Endothelial cell of umbilical vein (primary cell): ENCODE measurements at regions of chr2 and their contacts with region 1.

Region 1: DNA sequence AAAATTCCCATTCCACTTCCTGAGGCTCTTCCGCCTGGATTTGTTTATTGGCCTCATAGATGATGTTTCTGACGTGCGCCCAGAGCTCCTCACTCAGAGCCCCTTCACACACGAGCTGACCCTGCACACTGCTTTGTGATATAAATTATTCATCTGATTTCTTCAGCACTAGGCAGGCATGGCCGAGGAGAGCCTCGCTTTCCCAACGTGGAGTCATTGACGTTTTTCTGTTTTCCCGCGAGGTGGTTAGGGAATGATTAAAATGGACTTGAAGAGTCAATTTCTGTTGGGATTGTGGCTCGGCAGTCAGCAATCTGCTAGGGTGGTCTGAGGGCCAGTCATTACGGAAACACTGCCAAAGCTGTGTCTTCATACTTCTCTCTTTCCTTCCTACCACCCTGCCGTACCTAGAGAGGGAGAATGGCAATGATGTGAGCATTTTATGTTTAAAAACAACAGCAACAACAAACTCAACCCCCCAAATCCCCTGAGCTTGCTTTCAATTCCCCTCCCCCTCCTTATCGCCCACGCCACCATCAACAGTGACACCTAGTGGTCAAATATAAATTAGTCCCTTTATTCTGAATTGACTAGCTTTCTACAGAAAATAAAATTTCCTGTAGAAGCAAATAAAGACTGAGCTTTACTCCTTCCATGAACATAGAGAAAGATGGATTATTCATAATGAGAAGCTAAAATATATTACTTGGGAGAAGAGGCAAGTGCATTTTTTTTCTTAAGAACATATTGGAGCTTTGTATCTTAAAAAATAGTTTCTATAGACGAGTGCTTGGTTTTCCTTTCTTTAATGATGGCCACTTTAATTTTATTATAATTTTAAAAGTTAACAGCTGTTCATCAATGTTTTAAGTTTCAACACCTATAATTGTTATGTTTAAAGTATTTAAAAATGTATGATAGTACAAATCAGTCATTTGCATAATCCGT is 285.1 kb downstream of the MTX2 start:
- DNase-seq: peak; percentile 89
- H3K4me3 ChIP-seq: peak overlapping the region; percentile 11 to 48 (median 44)
- H3K27ac ChIP-seq: peak overlapping the region; percentile 77
- H3K4me1 ChIP-seq: peaks cover 13% of the 10 kb centered on the region
- H3K27me3 ChIP-seq: no peaks in the 10 kb centered on the region
- CTCF ChIP-seq: peak; percentile 47 to 65
- POLR2A ChIP-seq: no peak

Region 2: DNA sequence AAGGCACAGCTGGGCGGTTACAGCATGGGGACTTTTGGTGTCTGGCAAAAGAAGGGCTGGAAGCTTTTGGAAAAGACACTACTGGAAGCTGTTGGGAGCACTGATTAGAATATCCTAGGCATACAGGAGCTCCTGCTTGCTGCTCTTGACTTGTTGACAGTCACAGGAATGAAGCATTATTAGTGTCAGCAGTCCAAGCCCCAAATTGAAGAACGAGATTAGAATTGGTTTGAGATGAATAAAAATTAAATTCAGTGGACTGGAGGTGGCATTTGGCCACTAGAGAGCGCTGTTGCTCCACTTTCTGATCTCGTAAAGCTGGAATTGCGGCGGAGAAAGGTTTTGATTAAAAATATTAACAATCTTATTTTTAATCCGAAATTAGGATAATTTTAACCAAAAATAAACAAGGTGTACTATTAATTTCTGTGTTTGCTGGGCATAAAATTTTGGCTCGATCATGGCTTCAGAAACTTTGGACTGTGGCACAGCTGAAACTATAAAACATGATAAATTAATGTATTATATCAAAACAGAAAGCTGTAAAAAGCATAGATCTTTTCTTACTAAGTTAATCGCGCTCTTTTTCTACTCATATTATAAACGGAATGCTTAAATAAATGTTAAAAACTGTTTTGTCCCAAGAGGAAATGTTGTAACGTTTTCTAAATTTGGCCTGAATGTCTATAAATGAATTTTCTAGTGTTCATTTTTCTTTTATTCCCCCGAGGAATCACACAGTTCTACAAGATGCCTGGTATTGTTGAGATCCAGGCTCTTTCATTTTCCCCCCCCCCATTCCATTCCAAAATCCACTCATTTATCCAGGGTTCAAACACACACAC is 427.2 kb before region 1 on chr2:
- CTCF ChIA-PET with region 1: interaction called, 149 read pairs
- POLR2A ChIA-PET with region 1: interaction called, 5 read pairs
- dilution Hi-C with region 1: no loop called
- intact Hi-C with region 1: loop called (anchors 1 kb)
- DNase-seq: peak; percentile 68
- H3K4me3 ChIP-seq: peak overlapping the region in 2 of 3 experiments; percentile 48 to 67
- H3K27ac ChIP-seq: no peak overlapping the region
- H3K4me1 ChIP-seq: peaks cover 33% of the 10 kb centered on the region
- H3K27me3 ChIP-seq: peaks cover 5 to 6% of the 10 kb centered on the region in 2 experiments
- CTCF ChIP-seq: peak; percentile 61 to 66
- POLR2A ChIP-seq: no peak

Region 3: GRCh38 chr2:176167398-176167797 is 387.0 kb before region 1 on chr2:
- CTCF ChIA-PET with region 1: interaction called, 14 read pairs
- POLR2A ChIA-PET with region 1: no interaction called
- dilution Hi-C with region 1: no loop called
- intact Hi-C with region 1: no loop called
- DNase-seq: no peak
- H3K4me3 ChIP-seq: no peak overlapping the region
- H3K27ac ChIP-seq: no peak overlapping the region
- H3K4me1 ChIP-seq: peaks cover 3% of the 10 kb centered on the region
- H3K27me3 ChIP-seq: peaks cover 5 to 15% of the 10 kb centered on the region in 2 experiments
- CTCF ChIP-seq: no peak
- POLR2A ChIP-seq: no peak

Region 4: GRCh38 chr2:176445956-176446355 is 108.4 kb before region 1 on chr2:
- CTCF ChIA-PET with region 1: interaction called, 18 read pairs
- POLR2A ChIA-PET with region 1: no interaction called
- dilution Hi-C with region 1: no loop called
- intact Hi-C with region 1: no loop called
- DNase-seq: peak; percentile 73
- H3K4me3 ChIP-seq: no peak overlapping the region
- H3K27ac ChIP-seq: peak overlapping the region; percentile 78
- H3K4me1 ChIP-seq: peaks cover 17% of the 10 kb centered on the region
- H3K27me3 ChIP-seq: no peaks in the 10 kb centered on the region
- CTCF ChIP-seq: no peak
- POLR2A ChIP-seq: no peak

Region 5: GRCh38 chr2:176534798-176535466 is 19.4 kb before region 1 on chr2:
- CTCF ChIA-PET with region 1: interaction called, 20 read pairs
- POLR2A ChIA-PET with region 1: no interaction called
- dilution Hi-C with region 1: no loop called
- intact Hi-C with region 1: no loop called
- DNase-seq: no peak
- H3K4me3 ChIP-seq: no peak overlapping the region
- H3K27ac ChIP-seq: no peak overlapping the region
- H3K4me1 ChIP-seq: no peaks in the 10 kb centered on the region
- H3K27me3 ChIP-seq: no peaks in the 10 kb centered on the region
- CTCF ChIP-seq: no peak
- POLR2A ChIP-seq: no peak

Region 6: DNA sequence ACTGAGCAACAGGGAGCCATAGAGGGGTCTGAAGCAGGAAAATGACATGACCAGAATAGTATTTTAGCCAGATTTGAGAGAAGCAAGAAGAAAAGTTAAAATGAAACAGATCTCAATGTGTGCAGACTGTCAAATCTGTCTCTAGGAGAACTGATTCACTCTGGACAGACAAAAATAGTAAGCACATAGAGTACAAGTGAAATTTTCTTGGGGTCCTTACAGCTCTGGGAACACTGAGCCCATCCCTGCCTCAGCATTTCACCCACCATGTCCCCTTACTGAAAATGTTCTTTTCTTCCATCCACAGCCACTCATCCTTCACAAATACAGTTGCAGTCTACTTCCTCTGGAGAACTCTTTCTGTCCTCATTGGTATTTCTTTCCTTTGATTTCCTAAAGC is 74.1 kb after region 1 on chr2:
- CTCF ChIA-PET with region 1: interaction called, 122 read pairs
- POLR2A ChIA-PET with region 1: no interaction called
- dilution Hi-C with region 1: no loop called
- intact Hi-C with region 1: no loop called
- DNase-seq: no peak
- H3K4me3 ChIP-seq: no peak overlapping the region
- H3K27ac ChIP-seq: no peak overlapping the region
- H3K4me1 ChIP-seq: no peaks in the 10 kb centered on the region
- H3K27me3 ChIP-seq: no peaks in the 10 kb centered on the region
- CTCF ChIP-seq: no peak
- POLR2A ChIP-seq: no peak

Region 7: GRCh38 chr2:177148477-177149154 is 594.2 kb after region 1 on chr2:
- CTCF ChIA-PET with region 1: interaction called, 10 read pairs
- POLR2A ChIA-PET with region 1: no interaction called
- dilution Hi-C with region 1: loop called (anchors 25 kb)
- intact Hi-C with region 1: loop called (anchors 1 kb)
- DNase-seq: peak; percentile 85
- H3K4me3 ChIP-seq: peak overlapping the region in 2 of 3 experiments; percentile 29 to 62
- H3K27ac ChIP-seq: no peak overlapping the region
- H3K4me1 ChIP-seq: peaks cover 10% of the 10 kb centered on the region
- H3K27me3 ChIP-seq: peaks cover 9% of the 10 kb centered on the region in 2 experiments
- CTCF ChIP-seq: peak; percentile 87 to 89
- POLR2A ChIP-seq: no peak